Ascending aorta (tissue), 2 donors: ENCODE measurements at regions of chr19 and their contacts with region 1.

Region 1: GRCh38 chr19:57914531-57914930 is 1.9 kb downstream of the ZNF417 start:
- DNase-seq: no peak
- H3K4me3 ChIP-seq: no peak overlapping the region
- H3K27ac ChIP-seq: no peak overlapping the region
- H3K4me1 ChIP-seq: peaks cover 0 to 7% of the 10 kb centered on the region in 2 donors
- H3K27me3 ChIP-seq: no peaks in the 10 kb centered on the region
- CTCF ChIP-seq: no peak

Region 2: DNA sequence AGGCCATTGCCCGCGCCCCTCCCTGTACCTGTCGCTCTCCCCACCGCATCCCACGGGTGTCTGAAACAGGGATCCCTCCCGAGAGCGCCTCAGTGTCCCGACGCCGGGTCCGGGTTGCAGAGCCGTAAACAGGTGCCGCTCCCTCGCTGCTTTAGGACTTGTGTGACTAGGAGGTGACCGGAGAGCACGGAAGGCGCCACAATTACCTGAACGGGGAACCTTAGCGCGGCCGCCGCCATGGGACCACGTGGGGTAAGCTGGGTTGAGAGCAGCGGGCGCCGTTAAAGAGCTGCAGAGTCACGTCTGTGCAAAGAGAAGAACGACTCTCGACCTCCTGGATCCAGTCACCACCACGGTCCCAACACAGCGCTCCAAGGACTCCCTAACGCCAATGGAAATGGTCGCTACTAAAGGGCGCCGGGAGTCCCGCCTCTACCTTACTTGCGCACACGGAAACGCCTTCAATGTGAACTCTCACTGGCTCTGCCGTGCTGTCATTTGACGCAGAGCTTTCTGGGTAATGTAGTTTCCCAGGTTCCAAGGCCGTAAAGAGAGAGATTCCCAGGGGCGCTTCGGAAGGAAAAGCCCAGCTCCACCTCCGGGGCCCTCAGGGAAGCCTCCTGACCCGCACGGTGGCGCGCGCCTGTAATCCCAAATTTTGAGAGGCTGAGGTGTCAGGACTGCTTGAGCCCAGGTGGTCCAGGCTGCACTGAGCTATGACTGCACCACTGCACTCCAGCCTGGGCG is 99.9 kb before region 1 on chr19 and contains the start of gene ZNF552:
- intact Hi-C with region 1: loop called (anchors 2 kb)
- DNase-seq: peak; percentile 70 to 93
- H3K4me3 ChIP-seq: peak within 1 kb of the TSS; percentile 85 to 87
- H3K27ac ChIP-seq: peak within 1 kb of the TSS; percentile 71 to 75
- H3K4me1 ChIP-seq: peaks cover 2 to 8% of the 10 kb centered on the region in 2 donors
- H3K27me3 ChIP-seq: no peaks in the 10 kb centered on the region
- CTCF ChIP-seq: no peak
- total RNA-seq, gene ZNF552: 6.9 TPM

Region 3: DNA sequence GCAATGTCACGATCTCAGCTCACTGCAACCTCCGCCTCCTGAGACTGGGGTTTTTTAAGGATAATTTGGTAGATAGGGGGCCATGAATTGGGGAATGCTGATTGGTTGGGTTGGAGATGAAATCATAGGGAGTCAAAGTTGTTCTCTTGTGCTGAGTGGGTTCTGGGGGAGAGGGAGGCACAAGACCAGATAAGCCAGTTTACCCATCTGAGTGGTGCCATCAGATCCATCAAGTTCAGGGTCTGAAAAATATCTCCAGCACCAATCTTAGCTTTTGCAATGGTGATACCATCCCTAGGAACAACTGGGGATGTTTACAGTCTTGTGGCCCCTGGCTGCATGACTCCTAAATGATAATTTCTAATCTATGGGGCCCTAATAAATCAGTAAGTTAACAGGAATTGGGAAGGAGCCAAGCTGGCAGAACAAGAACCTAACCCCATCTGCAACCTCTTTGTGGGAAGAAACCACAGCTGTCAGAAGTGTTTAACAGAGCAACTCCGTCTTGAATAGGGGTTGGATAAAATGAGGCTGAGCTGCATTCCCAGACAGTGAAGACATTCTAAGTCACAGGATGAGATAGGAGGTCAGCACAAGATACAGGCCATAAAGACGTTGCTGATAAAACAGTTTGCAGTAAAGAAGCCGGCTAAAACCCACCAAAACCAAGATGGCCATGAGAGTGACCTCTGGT is 24.0 kb before region 1 on chr19:
- intact Hi-C with region 1: no loop called
- DNase-seq: no peak
- H3K4me3 ChIP-seq: no peak overlapping the region
- H3K27ac ChIP-seq: no peak overlapping the region
- H3K4me1 ChIP-seq: no peaks in the 10 kb centered on the region
- H3K27me3 ChIP-seq: no peaks in the 10 kb centered on the region
- CTCF ChIP-seq: no peak

Region 4: DNA sequence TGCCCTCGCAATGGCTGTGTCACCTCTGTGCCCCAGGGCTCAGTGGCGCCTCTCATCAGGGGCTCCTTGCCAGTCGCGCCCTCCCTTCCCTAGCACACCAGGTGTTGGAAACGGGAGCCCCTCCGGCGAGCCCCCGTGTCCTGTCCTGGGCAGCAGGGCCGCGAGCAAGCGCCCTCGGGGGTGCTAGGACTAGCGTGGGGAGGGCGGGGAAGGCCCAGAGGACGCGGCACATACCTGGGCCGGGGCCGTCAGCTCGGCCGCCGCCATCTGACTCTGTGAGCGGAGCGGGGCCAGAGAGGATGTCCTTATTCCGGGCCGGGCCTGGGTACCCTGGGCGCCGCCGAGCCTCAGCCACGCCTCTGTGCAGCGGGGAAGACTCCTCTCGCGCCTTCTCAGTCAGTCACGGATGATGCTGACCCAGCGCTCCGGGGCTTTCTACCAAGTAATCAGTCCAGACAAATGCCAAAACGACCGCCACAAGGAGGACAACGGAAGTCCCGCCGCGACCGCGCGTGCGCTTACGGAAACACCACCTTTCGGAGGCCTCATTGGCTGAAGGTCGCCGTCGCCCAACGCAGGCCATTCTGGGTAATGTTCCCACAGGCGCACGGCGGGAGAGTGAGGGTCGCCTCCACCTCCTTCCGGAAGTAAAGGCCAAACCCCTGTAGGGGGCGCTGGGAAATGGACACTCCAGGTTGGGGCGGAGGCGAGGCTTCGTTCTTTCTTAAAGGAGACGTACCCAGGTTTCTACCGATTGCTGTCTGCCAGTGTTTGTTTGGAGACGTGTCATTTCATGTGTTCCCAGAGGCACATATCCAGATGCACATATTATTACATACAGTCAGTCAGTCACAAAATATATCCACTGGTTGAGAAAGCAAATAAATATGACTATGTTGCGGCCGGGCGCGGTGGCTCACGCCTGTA is 32.9 kb after region 1 on chr19 and contains the start of gene ZNF256:
- intact Hi-C with region 1: no loop called
- DNase-seq: peak; percentile 55 to 95
- H3K4me3 ChIP-seq: peak within 1 kb of the TSS; percentile 58 to 82
- H3K27ac ChIP-seq: peak within 1 kb of the TSS; percentile 78 to 82
- H3K4me1 ChIP-seq: no peaks in the 10 kb centered on the region
- H3K27me3 ChIP-seq: no peaks in the 10 kb centered on the region
- CTCF ChIP-seq: peak; percentile 33 to 47 (median 46)
- total RNA-seq, gene ZNF256: 3.8 TPM

Region 5: GRCh38 chr19:58047672-58048071 is 133.1 kb after region 1 on chr19:
- intact Hi-C with region 1: no loop called
- DNase-seq: no peak
- H3K4me3 ChIP-seq: no peak overlapping the region
- H3K27ac ChIP-seq: no peak overlapping the region
- H3K4me1 ChIP-seq: no peaks in the 10 kb centered on the region
- H3K27me3 ChIP-seq: no peaks in the 10 kb centered on the region
- CTCF ChIP-seq: no peak